Activated CD4-positive, alpha-beta T cell treated with anti-CD3 and anti-CD28 coated beads, Interleukin-2, amount 10 ng/mL, durations not matched to agents 7 days and 5 days (primary cell): ENCODE measurements at regions of chr3 and their contacts with region 1.

Region 1: DNA sequence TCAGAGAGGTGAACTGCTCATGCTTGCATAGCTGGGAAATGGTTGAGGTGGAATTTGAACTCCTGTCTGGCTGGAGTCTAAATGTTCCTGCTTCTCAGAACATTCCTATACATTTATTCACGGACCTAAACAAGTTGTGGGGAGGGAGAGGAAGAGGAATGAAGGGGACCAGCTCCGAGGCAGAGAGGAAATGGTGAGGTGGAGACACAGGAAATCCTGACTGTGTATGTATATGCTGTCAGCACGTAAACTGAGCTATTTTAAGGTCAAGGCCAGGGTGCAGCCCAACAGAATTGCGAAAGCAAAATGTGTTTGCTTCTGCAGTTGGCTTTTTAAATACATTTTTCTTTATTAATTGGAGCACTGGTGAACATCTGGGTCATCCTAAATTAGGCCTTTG is 74.1 kb upstream of the POMGNT2 start:
- DNase-seq: peak; percentile 61
- H3K4me3 Mint-ChIP-seq: peak overlapping the region; percentile 56
- H3K27ac Mint-ChIP-seq: peak overlapping the region; percentile 88
- H3K4me1 Mint-ChIP-seq: peaks cover 58% of the 10 kb centered on the region
- H3K27me3 Mint-ChIP-seq: no peaks in the 10 kb centered on the region

Region 2: DNA sequence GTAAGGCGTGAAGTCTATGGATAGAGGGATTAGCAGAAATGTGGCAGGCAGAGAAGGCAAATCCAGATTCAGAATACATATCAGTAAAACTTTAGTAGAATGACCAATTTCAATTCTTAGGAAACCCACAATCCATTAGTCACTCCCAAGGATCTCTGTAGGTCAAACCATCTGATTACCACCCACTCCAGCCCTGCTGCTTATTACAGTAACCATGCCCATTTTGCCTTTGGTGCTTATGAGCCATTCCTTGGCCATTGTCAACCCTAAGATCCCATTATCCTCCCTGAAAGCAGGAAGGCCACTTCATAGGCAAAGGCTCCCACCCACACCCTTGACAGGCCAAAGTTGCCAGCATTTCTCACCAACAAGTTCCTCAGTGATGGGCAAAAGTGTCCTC is 499.8 kb before region 1 on chr3:
- CTCF ChIA-PET with region 1: no interaction called
- POLR2A ChIA-PET with region 1: no interaction called
- DNase-seq: no peak
- H3K4me3 Mint-ChIP-seq: no peak overlapping the region
- H3K27ac Mint-ChIP-seq: no peak overlapping the region
- H3K4me1 Mint-ChIP-seq: no peaks in the 10 kb centered on the region
- H3K27me3 Mint-ChIP-seq: peaks cover 6% of the 10 kb centered on the region

Region 3: GRCh38 chr3:43162230-43163084 is 17.6 kb before region 1 on chr3:
- CTCF ChIA-PET with region 1: interaction called, 12 read pairs
- POLR2A ChIA-PET with region 1: no interaction called
- DNase-seq: peak; percentile 78
- H3K4me3 Mint-ChIP-seq: peak overlapping the region; percentile 54
- H3K27ac Mint-ChIP-seq: peak overlapping the region; percentile 96
- H3K4me1 Mint-ChIP-seq: peaks cover 30% of the 10 kb centered on the region
- H3K27me3 Mint-ChIP-seq: no peaks in the 10 kb centered on the region

Region 4: GRCh38 chr3:43169987-43170386 is 10.0 kb before region 1 on chr3:
- CTCF ChIA-PET with region 1: interaction called, 11 read pairs
- POLR2A ChIA-PET with region 1: no interaction called
- DNase-seq: no peak
- H3K4me3 Mint-ChIP-seq: no peak overlapping the region
- H3K27ac Mint-ChIP-seq: no peak overlapping the region
- H3K4me1 Mint-ChIP-seq: peaks cover 2% of the 10 kb centered on the region
- H3K27me3 Mint-ChIP-seq: peaks cover 6% of the 10 kb centered on the region

Region 5: GRCh38 chr3:43190666-43191065 is 10.6 kb after region 1 on chr3:
- CTCF ChIA-PET with region 1: interaction called, 20 read pairs
- POLR2A ChIA-PET with region 1: no interaction called
- DNase-seq: no peak
- H3K4me3 Mint-ChIP-seq: no peak overlapping the region
- H3K27ac Mint-ChIP-seq: no peak overlapping the region
- H3K4me1 Mint-ChIP-seq: peaks cover 36% of the 10 kb centered on the region
- H3K27me3 Mint-ChIP-seq: peaks cover 12% of the 10 kb centered on the region

Region 6: DNA sequence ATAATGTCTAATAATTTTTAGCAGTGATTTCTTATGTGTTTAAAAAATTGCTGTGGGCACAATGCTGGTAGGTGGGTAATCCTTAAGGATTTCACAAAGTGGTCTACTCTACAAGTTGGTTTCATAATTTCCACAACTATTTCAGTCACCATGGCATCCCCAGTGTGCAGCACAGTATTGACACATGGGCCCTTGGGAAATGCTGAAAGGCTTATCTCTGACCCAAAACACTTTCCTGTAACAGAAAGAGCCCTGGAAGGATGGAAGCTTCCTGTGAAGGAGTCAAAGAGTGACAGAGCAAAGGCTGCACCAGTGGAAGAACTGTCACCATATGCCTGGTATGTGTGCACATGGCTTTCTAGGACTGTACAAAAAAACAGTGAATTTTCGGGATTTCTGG is 288.1 kb after region 1 on chr3:
- CTCF ChIA-PET with region 1: no interaction called
- POLR2A ChIA-PET with region 1: no interaction called
- DNase-seq: no peak
- H3K4me3 Mint-ChIP-seq: no peak overlapping the region
- H3K27ac Mint-ChIP-seq: no peak overlapping the region
- H3K4me1 Mint-ChIP-seq: no peaks in the 10 kb centered on the region
- H3K27me3 Mint-ChIP-seq: peaks cover 2% of the 10 kb centered on the region